ENCODE measurements at regions of chr7 and their contacts with region 1.

Region 1: DNA sequence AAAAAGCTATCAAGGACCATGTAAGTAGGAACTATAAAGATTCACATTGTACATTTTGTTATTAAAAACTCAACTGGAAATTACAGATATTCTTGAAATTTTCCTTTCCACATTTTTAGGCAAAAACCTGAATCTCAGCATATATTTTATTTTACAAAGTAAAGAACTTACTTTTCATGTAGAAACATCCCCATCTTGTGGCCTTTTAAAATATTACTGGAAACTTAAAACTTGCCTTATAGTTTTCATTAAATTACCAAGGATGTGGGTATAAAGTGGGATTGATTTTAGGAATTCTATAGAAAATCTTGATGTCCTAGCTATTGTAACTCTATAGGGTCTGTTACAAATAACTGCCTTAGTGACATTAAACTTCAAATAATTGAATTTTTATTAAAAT is 10.6 kb downstream of the DBF4 start:
- DNase-seq: no peak
- ATAC-seq: no peak
- H3K4me3 ChIP-seq: no peak overlapping the region
- H3K27ac ChIP-seq: no peak overlapping the region
- H3K4me1 ChIP-seq: no peaks in the 10 kb centered on the region
- H3K27me3 ChIP-seq: no peaks in the 10 kb centered on the region
- CTCF ChIP-seq: peak; percentile 25; the same call in 1 of the 2 replicates

Region 2: DNA sequence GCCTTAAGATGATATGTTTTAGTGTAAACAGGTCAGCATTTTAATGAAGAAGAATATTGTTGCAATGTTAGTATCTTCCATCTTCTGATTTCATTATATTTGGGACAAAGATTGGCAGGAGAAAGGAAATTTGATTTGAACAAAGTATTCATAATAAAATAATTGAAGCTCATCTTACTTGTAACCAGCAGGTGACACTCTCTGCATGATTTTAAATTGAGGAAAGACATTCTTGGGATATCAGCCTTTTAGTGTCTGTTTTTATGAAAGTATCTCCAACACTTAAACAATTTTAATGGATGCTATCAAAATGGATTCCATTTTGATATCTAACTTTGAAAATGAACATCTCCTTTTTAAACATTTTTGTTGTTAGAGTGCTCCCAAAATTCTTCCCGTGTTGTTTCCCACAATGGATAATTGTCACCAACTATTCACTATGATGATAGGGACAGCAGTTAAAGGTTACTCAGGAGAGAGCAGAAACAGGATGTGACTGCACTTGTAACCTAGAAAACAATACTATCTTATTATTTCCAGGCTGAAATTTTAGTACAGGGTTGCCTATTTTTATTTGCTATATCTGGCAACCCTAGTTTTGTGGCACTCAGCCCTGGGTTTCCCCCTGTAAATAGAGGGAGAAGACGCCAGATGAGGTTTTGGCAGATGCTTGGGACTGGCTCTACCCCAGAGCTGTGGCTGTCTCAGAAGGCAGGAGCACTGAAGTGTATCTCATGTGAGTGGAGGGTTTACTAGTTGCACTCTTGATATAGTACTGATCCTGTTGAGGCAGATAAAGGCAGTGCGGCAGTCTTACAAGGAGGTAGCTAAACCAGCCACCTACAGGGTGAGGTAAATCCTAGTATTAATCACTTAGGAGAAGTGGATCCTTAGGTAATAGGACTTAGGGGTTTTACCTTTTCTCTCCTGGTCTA is 380.4 kb before region 1 on chr7:
- CTCF ChIA-PET with region 1: no interaction called
- POLR2A ChIA-PET with region 1: no interaction called
- in situ Hi-C with region 1: no loop called
- intact Hi-C with region 1: loop called (anchors 2 kb)
- DNase-seq: no peak
- ATAC-seq: no peak
- H3K4me3 ChIP-seq: no peak overlapping the region
- H3K27ac ChIP-seq: no peak overlapping the region
- H3K4me1 ChIP-seq: no peaks in the 10 kb centered on the region
- H3K27me3 ChIP-seq: no peaks in the 10 kb centered on the region
- CTCF ChIP-seq: peak; percentile 54; the same call in 1 of the 2 replicates

Region 3: GRCh38 chr7:87797798-87798403 is 89.0 kb before region 1 on chr7:
- CTCF ChIA-PET with region 1: no interaction called
- POLR2A ChIA-PET with region 1: no interaction called
- in situ Hi-C with region 1: no loop called
- intact Hi-C with region 1: loop called (anchors 2 kb)
- DNase-seq: peak; percentile 58
- ATAC-seq: peak; percentile 74
- H3K4me3 ChIP-seq: no peak overlapping the region
- H3K27ac ChIP-seq: no peak overlapping the region
- H3K4me1 ChIP-seq: no peaks in the 10 kb centered on the region
- H3K27me3 ChIP-seq: no peaks in the 10 kb centered on the region
- CTCF ChIP-seq: peak; percentile 69; the same call in 1 of the 2 replicates

Region 4: GRCh38 chr7:87816389-87816788 is 70.5 kb before region 1 on chr7:
- CTCF ChIA-PET with region 1: no interaction called
- POLR2A ChIA-PET with region 1: interaction called, 12 read pairs
- in situ Hi-C with region 1: no loop called
- intact Hi-C with region 1: no loop called
- DNase-seq: no peak
- ATAC-seq: no peak
- H3K4me3 ChIP-seq: no peak overlapping the region
- H3K27ac ChIP-seq: no peak overlapping the region
- H3K4me1 ChIP-seq: no peaks in the 10 kb centered on the region
- H3K27me3 ChIP-seq: peaks cover 5% of the 10 kb centered on the region
- CTCF ChIP-seq: no peak

Region 5: DNA sequence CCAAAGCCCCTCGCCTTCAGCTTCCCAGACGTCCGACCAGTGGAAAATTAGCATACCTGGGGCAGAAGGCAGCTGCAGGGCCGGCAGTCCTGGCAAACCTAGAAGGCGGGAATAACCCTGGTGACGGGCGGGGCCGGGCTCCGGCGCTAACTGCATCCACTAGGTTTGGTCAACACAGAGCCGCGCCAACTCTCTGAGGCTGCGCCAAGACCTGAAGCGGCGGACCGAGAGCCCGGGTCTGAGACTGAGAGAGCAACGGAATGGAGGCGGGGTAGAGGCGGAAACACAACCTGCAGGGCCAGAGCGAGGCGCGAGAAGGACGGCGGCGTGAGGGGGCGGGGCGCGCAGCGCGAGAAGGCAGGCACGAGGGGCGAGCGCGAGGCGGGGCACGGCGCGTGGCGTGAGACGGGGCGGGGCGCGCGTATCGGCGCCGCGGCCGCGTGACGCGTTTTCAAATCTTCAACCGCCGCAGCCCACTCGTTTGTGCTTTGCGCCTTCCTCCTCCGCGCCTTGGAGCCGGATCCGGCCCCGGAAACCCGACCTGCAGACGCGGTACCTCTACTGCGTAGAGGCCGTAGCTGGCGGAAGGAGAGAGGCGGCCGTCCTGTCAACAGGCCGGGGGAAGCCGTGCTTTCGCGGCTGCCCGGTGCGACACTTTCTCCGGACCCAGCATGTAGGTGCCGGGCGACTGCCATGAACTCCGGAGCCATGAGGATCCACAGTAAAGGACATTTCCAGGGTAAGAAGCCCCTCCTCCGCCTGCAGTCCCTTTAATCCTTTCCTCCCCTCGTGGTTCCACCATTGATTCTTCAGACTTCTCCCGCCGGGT is 10.6 kb before region 1 on chr7 and contains the starts of genes DBF4 and SLC25A40:
- CTCF ChIA-PET with region 1: no interaction called
- POLR2A ChIA-PET with region 1: interaction called, 15 read pairs
- in situ Hi-C with region 1: no loop called
- intact Hi-C with region 1: no loop called
- DNase-seq: peak; percentile 78
- ATAC-seq: peak; percentile 96
- H3K4me3 ChIP-seq: peak within 1 kb of the TSS; percentile 64 to 93
- H3K27ac ChIP-seq: peak within 1 kb of the TSS; percentile 94
- H3K4me1 ChIP-seq: peaks cover 19% of the 10 kb centered on the region
- H3K27me3 ChIP-seq: no peaks in the 10 kb centered on the region
- CTCF ChIP-seq: no peak
- total RNA-seq, gene DBF4: 48.8 TPM
- total RNA-seq, gene SLC25A40: 43.7 TPM

Region 6: GRCh38 chr7:87910138-87910537 is 23.3 kb after region 1 on chr7:
- CTCF ChIA-PET with region 1: no interaction called
- POLR2A ChIA-PET with region 1: interaction called, 13 read pairs
- in situ Hi-C with region 1: no loop called
- intact Hi-C with region 1: no loop called
- DNase-seq: no peak
- ATAC-seq: peak; percentile 55
- H3K4me3 ChIP-seq: no peak overlapping the region
- H3K27ac ChIP-seq: no peak overlapping the region
- H3K4me1 ChIP-seq: no peaks in the 10 kb centered on the region
- H3K27me3 ChIP-seq: no peaks in the 10 kb centered on the region
- CTCF ChIP-seq: no peak